ENCODE measurements at regions of chr1 and their contacts with region 1.

Region 1: DNA sequence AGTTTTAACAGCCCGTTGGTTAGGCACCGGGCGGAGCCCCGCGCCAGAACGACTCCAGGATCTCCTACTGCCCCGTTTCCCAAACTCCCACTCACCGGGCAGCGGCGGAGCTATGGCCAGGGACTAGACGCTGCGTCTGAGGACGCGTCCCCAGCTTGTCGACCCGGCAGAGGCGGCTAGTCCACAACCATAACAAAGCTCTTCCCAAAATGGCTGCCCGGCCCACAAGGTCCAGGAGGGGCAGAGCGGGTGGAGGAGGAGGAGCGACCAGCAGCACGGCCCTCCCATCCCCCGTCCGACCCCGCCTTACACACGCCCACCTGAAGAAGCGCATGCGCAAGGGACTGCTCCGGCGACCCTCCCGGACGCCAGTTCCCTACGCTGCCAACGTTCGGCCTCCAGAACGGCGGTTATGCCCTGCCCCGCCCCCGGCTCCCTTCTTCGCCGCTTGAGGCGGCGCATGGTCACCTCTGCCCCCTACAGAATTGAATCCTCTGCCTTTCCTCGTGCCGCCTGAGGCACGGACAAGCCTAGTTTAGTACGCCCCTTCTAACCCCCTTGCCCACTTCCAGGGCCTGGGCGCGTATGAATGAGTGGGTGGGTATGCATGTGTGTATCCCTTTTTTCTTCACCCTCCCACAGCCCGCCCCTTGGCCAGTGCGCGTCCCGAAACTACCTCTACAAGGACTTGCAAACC is at the start of gene GPBP1L1:
- DNase-seq: peak; percentile 96
- H3K4me3 Mint-ChIP-seq: peak within 1 kb of the TSS; percentile 99
- H3K27ac Mint-ChIP-seq: peak within 1 kb of the TSS; percentile 99
- H3K4me1 Mint-ChIP-seq: peaks cover 31% of the 10 kb centered on the region
- H3K27me3 Mint-ChIP-seq: no peaks in the 10 kb centered on the region
- total RNA-seq, gene GPBP1L1: 99.3 and 109 TPM in 2 replicates

Region 2: GRCh38 chr1:44674113-44675000 is 1012.1 kb before region 1 on chr1 and contains the starts of genes ARMH1 and TMEM53:
- intact Hi-C with region 1: loop called (anchors 1 kb)
- DNase-seq: peak; percentile 98
- H3K4me3 Mint-ChIP-seq: peak within 1 kb of the TSS; percentile 80
- H3K27ac Mint-ChIP-seq: peak within 1 kb of the TSS; percentile 79
- H3K4me1 Mint-ChIP-seq: peaks cover 30% of the 10 kb centered on the region
- H3K27me3 Mint-ChIP-seq: no peaks in the 10 kb centered on the region
- total RNA-seq, gene ARMH1: 95.3 and 99.8 TPM in 2 replicates
- total RNA-seq, gene TMEM53: 4.3 and 6.6 TPM in 2 replicates

Region 3: DNA sequence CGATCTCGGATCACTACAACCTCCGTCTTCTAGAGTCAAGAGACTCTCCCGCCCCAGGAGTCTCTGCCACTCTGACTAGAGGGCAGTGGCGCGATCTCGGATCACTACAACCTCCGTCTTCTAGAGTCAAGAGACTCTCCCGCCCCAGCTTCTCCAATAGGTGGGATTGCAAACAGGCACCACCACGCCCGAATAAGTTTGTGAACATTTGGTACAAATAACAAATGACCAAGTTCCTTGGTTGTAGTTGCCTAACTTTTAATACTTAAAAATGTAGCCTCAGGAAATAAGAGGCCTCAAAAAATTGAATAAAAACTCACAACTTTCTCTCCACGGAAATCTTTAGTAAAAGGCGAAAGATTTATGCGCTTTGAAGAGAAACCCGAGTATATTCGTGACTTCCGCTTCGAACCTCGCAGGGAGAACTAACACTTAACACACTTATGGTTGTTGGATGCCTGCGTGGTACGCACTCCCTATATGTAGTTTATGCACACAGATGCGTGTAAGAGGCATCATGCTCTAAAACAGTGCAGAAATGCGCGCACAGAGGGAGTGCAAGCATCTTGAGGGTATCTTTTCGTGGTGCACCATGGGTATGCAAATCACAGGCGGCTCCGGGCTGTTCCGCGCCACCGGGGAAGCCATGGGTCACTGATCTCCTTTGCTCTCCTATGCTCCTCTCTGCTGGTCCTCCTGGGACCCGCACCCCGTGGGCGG is 866.7 kb before region 1 on chr1:
- intact Hi-C with region 1: loop called (anchors 5 kb)
- DNase-seq: peak; percentile 81
- H3K4me3 Mint-ChIP-seq: peak overlapping the region; percentile 87
- H3K27ac Mint-ChIP-seq: peak overlapping the region; percentile 97
- H3K4me1 Mint-ChIP-seq: peaks cover 54% of the 10 kb centered on the region
- H3K27me3 Mint-ChIP-seq: no peaks in the 10 kb centered on the region

Region 4: GRCh38 chr1:45339789-45340570 is 346.5 kb before region 1 on chr1 and contains the starts of genes MUTYH and TOE1:
- intact Hi-C with region 1: loop called (anchors 1 kb)
- DNase-seq: peak; percentile 94
- H3K4me3 Mint-ChIP-seq: peak within 1 kb of the TSS; percentile 99
- H3K27ac Mint-ChIP-seq: peak within 1 kb of the TSS; percentile 100
- H3K4me1 Mint-ChIP-seq: peaks cover 39% of the 10 kb centered on the region
- H3K27me3 Mint-ChIP-seq: no peaks in the 10 kb centered on the region
- total RNA-seq, gene MUTYH: 53.4 and 55.9 TPM in 2 replicates
- total RNA-seq, gene TOE1: 39.1 and 41.4 TPM in 2 replicates

Region 5: DNA sequence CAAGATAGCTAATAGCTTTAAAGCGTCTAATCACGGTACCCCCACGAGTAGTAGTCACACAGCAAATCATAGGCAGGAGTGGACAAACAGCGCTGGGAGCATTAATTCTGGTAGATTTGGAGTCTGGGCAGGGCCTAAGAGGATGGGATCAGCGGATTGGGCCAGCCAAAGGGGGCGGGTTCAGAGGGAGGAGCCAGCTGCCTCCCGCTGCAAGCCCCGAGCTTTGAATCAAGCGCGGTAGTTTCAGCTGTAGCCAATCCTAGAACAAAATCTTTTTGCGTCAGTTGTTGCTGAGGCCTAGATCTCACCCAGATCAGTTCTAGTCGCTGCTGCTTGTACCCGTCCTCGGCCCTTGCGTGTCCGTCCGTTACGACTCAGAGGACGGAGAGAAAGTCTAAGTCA is 103.2 kb before region 1 on chr1:
- intact Hi-C with region 1: loop called (anchors 1 kb)
- DNase-seq: peak; percentile 93
- H3K4me3 Mint-ChIP-seq: peak overlapping the region; percentile 100
- H3K27ac Mint-ChIP-seq: peak overlapping the region; percentile 98
- H3K4me1 Mint-ChIP-seq: peaks cover 29% of the 10 kb centered on the region
- H3K27me3 Mint-ChIP-seq: no peaks in the 10 kb centered on the region

Region 6: GRCh38 chr1:45843474-45843905 is 157.0 kb after region 1 on chr1:
- intact Hi-C with region 1: loop called (anchors 1 kb)
- DNase-seq: no peak
- H3K4me3 Mint-ChIP-seq: peak overlapping the region; percentile 1
- H3K27ac Mint-ChIP-seq: peak overlapping the region; percentile 70
- H3K4me1 Mint-ChIP-seq: peaks cover 14% of the 10 kb centered on the region
- H3K27me3 Mint-ChIP-seq: no peaks in the 10 kb centered on the region

Region 7: DNA sequence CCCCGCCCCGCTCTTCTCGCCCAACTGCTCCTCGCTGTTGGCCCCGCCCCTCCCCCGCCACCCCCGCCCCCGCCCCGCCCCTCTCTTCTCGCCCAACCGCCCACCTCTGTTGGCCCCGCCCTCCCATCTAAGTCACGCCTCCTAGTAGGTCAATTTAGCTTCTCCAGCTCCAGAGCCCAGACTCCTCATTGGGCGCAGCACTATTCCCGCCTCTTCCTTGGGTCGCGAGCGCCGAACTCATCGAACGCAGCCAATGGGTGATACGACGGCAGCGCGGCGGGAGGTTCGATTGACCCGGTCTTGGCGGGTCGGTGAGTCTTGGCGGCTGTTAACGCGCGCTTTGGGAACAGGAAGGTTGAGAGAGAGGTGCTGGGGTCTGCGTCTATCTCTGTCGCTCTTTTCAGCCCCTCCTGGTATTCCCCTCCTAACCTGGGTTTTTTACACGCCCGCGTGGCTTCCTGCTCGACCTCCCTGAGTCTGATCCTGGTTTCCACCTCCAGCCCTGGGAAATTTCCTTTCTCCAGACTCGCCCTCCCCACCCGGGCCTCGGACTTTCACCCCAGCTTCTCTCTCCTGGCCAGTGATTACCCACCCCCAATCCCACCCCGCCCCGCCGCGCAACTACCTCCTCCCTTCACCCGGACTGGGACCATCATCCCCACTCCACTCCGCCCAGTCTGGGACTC is 561.1 kb after region 1 on chr1 and contains the start of gene RAD54L:
- intact Hi-C with region 1: loop called (anchors 1 kb)
- DNase-seq: peak; percentile 95
- H3K4me3 Mint-ChIP-seq: peak within 1 kb of the TSS; percentile 97
- H3K27ac Mint-ChIP-seq: peak within 1 kb of the TSS; percentile 94
- H3K4me1 Mint-ChIP-seq: peaks cover 39% of the 10 kb centered on the region
- H3K27me3 Mint-ChIP-seq: no peaks in the 10 kb centered on the region
- total RNA-seq, gene RAD54L: 49.7 and 50.2 TPM in 2 replicates